Activated CD8-positive, alpha-beta T cell treated with anti-CD3 and anti-CD28 coated beads, Interleukin-2, amount 10 ng/mL, durations not matched to agents 7 days and 5 days (primary cell): ENCODE measurements at regions of chr14 and their contacts with region 1.

Region 1: DNA sequence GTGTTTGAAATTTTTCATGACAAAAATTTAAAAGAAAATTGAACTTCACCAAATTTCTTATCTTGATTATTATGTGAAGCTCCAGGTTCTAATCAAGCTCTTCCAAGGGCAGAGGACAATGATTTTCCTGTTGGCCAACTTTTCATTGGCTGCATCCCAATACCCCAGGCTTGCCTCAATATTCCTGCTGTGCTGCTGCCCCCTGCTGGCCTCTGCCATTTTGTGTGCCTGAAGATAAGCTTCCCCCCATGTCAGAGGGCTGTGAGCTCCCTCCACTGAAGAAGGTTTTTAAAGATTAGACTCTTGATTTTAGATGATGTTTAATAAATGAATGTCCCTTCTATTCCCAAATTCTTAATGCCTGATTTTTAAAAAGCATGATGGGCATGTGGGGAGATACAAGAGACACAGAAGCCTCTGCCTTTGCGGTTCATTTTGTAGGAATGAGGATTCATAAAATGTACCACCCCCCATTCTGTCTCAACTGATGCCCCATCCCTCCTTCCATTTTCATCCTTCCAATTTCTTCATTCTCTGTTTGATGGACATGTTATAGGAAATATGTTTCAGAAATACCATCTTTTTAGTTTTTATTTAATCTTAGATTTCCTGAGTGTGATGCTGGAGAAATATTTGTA is 76.7 kb upstream of the RGS6 start:
- DNase-seq: peak; percentile 64
- ATAC-seq: no peak
- H3K4me3 Mint-ChIP-seq: no peak overlapping the region
- H3K27ac Mint-ChIP-seq: no peak overlapping the region
- H3K4me1 Mint-ChIP-seq: peaks cover 11% of the 10 kb centered on the region
- H3K27me3 Mint-ChIP-seq: peaks cover 33% of the 10 kb centered on the region

Region 2: DNA sequence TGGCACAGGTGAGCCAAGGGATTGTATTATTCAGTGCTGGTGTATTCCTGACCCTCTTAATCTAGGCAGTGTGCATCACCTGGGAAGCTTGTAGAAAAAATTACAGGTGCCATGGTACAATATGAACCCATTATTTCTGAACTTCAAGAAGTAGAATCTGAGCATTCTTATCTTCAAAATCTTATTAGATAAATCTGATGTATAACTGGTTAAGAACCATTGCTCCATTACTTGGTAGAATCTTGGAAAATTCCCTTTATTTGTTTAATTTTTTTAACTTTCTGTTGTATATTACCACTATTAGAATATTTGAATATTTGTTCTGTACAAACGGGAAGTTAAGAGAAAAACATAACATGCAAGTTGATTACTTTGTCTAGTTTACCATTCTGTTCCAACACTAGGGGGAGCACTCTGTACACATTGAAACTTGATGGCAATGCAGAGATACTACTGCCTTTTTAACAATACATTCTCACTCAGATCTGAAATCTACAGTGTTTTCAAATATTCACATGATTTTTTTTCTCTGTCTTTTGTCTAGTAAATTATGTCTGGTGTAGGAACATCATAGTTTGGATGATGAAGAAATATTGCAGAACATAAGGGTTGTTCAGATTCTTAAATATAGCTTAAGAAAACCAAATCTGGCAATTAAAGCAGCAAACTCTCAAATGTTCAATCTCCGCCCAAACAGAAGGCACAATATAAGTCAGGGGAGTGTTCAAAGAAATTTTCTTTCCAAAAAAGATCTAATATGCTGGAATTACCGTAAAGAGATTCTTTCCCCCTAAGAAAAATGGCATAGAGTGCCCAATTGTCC is 751.6 kb before region 1 on chr14:
- CTCF ChIA-PET with region 1: interaction called, 16 read pairs
- POLR2A ChIA-PET with region 1: no interaction called
- DNase-seq: peak; percentile 44
- ATAC-seq: peak; percentile 60
- H3K4me3 Mint-ChIP-seq: no peak overlapping the region
- H3K27ac Mint-ChIP-seq: no peak overlapping the region
- H3K4me1 Mint-ChIP-seq: no peaks in the 10 kb centered on the region
- H3K27me3 Mint-ChIP-seq: no peaks in the 10 kb centered on the region

Region 3: GRCh38 chr14:71776471-71777360 is 78.8 kb before region 1 on chr14:
- CTCF ChIA-PET with region 1: interaction called, 12 read pairs
- POLR2A ChIA-PET with region 1: no interaction called
- DNase-seq: peak; percentile 29
- ATAC-seq: peak; percentile 44
- H3K4me3 Mint-ChIP-seq: no peak overlapping the region
- H3K27ac Mint-ChIP-seq: no peak overlapping the region
- H3K4me1 Mint-ChIP-seq: peaks cover 12% of the 10 kb centered on the region
- H3K27me3 Mint-ChIP-seq: peaks cover 12% of the 10 kb centered on the region

Region 4: GRCh38 chr14:71908116-71908515 is 52.6 kb after region 1 on chr14:
- CTCF ChIA-PET with region 1: no interaction called
- POLR2A ChIA-PET with region 1: no interaction called
- DNase-seq: no peak
- ATAC-seq: no peak
- H3K4me3 Mint-ChIP-seq: no peak overlapping the region
- H3K27ac Mint-ChIP-seq: no peak overlapping the region
- H3K4me1 Mint-ChIP-seq: no peaks in the 10 kb centered on the region
- H3K27me3 Mint-ChIP-seq: peaks cover 24% of the 10 kb centered on the region